HEK293 (cell line): ENCODE measurements at regions of chr3 and their contacts with region 1.

Region 1: DNA sequence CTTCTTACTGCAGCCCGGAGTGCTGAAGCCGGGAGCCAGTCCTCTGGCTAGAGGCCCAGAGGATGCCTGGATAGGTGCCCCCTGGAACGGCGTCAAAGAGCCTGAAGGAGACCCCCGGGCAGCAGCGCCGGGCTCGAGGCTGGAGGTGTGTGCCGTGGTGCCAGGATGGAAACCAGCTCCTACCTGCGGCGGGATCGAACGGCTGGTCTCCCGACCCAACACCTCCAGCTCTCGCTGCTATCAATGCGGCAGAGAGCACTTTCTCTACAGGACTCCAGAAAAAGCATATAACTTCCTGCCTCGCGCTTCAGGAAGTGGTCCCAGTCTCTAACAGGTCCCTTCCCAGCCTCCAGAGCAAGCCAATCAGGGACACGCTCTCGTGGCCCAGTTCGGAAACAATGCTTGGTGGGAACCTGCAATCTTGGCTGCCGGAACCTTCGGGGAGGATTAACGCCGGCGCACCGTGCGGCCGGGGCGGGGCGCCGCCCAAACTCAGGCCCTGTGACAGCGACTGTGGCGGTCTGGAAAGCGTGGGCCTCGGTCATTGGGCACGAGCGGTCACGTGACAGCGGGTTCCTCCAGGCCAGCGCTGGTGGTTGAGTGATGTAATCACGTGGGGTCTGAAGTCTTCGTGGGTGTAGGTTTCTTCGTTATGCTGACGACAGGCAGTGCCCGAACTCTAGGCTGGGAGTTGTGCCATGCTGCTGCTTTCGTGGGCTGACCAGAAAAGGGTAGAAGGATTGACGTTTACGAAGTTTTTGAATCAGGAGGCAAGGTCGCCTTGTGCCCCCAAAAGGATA is at the start of gene SLC33A1:
- H3K4me3 ChIP-seq: peak within 1 kb of the TSS; percentile 99
- H3K27ac ChIP-seq: peak within 1 kb of the TSS; percentile 70
- H3K4me1 ChIP-seq: no peaks in the 10 kb centered on the region
- CTCF ChIP-seq: no peak

Region 2: GRCh38 chr3:155805802-155806618 is 48.3 kb before region 1 on chr3 and contains the start of gene C3orf33:
- CTCF ChIA-PET with region 1: interaction called, 9 read pairs
- POLR2A ChIA-PET with region 1: interaction called, 12 read pairs
- H3K4me3 ChIP-seq: peak within 1 kb of the TSS; percentile 61
- H3K27ac ChIP-seq: peak within 1 kb of the TSS; percentile 58; the same call in 1 of the 2 replicates
- H3K4me1 ChIP-seq: no peaks in the 10 kb centered on the region
- CTCF ChIP-seq: peak; percentile 85

Region 3: DNA sequence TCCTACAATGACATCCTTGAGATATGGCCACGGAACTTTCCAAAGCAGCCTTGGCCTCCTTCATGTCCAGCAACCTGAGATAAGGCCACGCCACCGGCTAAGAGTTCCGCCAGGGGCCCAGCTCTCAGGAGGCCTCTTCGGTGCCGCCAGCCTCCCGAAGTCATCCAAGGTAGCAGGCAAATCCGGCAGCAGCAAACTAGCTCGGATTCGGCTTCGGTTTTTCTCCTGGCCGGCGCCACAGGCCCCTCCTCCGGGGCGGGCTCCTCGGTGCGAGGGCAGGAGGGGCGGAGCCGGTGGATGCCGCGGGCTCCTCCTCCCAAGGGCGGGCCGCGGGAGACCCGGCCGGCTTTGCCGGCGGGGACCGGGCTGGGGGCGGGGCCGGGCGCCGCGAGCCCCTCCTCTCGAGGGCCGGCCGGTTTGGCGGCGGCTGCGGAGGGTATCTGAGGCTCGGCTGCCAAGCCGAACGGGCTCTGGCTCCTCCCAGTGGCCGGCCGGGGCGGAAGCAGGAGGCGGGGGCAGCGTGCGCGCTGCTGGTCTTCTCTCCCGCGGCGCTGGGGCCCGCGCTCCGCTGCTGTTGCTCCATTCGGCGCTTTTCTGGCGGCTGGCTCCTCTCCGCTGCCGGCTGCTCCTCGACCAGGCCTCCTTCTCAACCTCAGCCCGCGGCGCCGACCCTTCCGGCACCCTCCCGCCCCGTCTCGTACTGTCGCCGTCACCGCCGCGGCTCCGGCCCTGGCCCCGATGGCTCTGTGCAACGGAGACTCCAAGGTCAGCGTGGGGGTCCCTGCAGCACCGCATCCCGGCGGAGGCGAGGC is 16.0 kb after region 1 on chr3 and contains the start of gene GMPS:
- CTCF ChIA-PET with region 1: interaction called, 5 read pairs
- POLR2A ChIA-PET with region 1: interaction called, 24 read pairs
- H3K4me3 ChIP-seq: peak within 1 kb of the TSS; percentile 99
- H3K27ac ChIP-seq: peak within 1 kb of the TSS; percentile 94
- H3K4me1 ChIP-seq: no peaks in the 10 kb centered on the region
- CTCF ChIP-seq: peak; percentile 65